GM12878 (cell line): ENCODE measurements at regions of chr20 and their contacts with region 1.

Region 1: DNA sequence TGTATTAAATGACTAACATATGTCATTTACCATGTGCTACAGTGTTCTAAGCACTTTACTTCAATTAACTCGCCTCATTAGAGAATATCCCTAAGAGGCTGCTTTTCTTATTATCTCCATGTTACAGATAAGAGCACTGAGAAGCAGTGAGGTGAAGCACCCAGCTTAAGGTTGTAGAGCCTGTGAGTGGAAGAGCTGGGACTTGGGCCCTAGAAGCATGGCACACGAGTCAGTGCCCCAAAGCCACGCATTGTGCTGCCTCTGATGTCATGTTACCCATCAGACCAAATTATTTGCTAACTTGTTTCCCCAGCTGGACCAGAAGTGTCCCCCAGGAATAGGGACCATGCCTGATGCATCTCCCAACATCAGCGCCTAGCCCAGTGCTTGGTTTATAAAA is 34.1 kb downstream of the POFUT1 start:
- DNase-seq: no peak
- ATAC-seq: no peak; the same call in 2 of the 3 replicates
- H3K4me3 ChIP-seq: no peak overlapping the region
- H3K27ac ChIP-seq: no peak overlapping the region
- H3K4me1 ChIP-seq: peaks cover 13% of the 10 kb centered on the region
- H3K27me3 ChIP-seq: no peaks in the 10 kb centered on the region
- CTCF ChIP-seq: no peak
- EP300 ChIP-seq: no peak
- POLR2A ChIP-seq: no peak
- RAD21 ChIP-seq: no peak

Region 2: GRCh38 chr20:32040142-32041022 is 201.4 kb before region 1 on chr20:
- CTCF ChIA-PET with region 1: no interaction called
- POLR2A ChIA-PET with region 1: no interaction called
- RAD21 ChIA-PET with region 1: no interaction called
- SMC1A ChIA-PET with region 1: no interaction called
- in situ Hi-C with region 1: no loop called
- intact Hi-C with region 1: no loop called
- DNase-seq: no peak
- ATAC-seq: peak; percentile 86
- H3K4me3 ChIP-seq: peak overlapping the region; percentile 53
- H3K27ac ChIP-seq: peak overlapping the region; percentile 48
- H3K4me1 ChIP-seq: peaks cover 14% of the 10 kb centered on the region
- H3K27me3 ChIP-seq: no peaks in the 10 kb centered on the region
- CTCF ChIP-seq: no peak
- EP300 ChIP-seq: no peak; a peak in 1 of 4 replicates
- POLR2A ChIP-seq: no peak
- RAD21 ChIP-seq: no peak

Region 3: DNA sequence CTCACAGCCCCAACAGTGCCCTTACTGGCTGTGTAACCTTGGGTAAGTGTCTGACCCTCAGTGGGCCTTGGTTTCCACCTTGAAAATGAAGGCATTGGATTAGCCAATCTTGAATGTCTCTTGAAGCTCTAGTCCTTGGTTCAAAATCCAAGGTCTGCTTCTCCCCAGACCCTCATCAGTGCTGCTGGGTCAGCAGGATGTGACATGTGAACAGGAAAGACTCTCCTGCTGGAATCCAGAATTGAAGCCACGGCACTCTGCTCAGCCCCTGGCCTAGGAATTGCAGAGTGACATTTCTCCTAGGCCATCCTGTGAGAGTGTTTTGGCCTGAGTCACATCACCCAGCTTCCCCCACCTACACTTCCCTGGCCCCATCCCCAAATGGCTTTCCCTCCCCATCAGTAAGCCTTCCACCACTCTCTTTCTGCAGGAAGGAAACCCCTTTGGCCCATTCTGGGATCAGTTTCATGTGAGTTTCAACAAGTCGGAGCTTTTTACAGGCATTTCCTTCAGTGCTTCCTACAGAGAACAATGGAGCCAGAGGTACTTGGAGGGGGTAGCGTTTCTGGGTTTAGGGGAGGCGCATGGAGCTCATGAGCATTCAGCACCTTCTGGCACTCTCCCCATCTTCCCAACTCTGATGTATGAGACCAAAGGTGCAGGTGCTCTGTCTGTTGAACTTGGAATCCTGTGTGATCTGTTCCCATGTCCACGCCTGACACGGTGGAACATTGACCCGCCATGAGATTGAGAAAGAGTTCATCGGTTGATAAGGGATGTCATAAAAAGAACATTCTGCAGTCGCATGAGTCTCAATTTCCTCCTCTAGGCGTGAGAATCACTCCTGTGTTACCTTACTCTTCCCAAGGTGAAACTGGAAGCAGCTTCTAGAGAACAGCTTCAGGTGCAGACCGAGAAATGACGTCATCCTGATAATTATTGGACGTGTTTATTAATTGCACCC is 25.3 kb before region 1 on chr20:
- CTCF ChIA-PET with region 1: no interaction called
- POLR2A ChIA-PET with region 1: interaction called, 10 read pairs
- RAD21 ChIA-PET with region 1: no interaction called
- SMC1A ChIA-PET with region 1: interaction called, 4 read pairs
- in situ Hi-C with region 1: no loop called
- intact Hi-C with region 1: no loop called
- DNase-seq: no peak
- ATAC-seq: no peak
- H3K4me3 ChIP-seq: no peak overlapping the region
- H3K27ac ChIP-seq: no peak overlapping the region
- H3K4me1 ChIP-seq: no peaks in the 10 kb centered on the region
- H3K27me3 ChIP-seq: no peaks in the 10 kb centered on the region
- CTCF ChIP-seq: no peak
- EP300 ChIP-seq: no peak
- POLR2A ChIP-seq: no peak
- RAD21 ChIP-seq: no peak